Activated naive CD4-positive, alpha-beta T cell treated with anti-CD3 and anti-CD28 coated beads for 36 hours (primary cell): ENCODE measurements at regions of chr14 and their contacts with region 1.

Region 1: GRCh38 chr14:35826218-35826951 is at the start of gene BRMS1L:
- DNase-seq: peak; percentile 99
- H3K4me3 Mint-ChIP-seq: peak within 1 kb of the TSS; percentile 84
- H3K27ac Mint-ChIP-seq: peak within 1 kb of the TSS; percentile 92
- H3K4me1 Mint-ChIP-seq: peaks cover 29% of the 10 kb centered on the region
- H3K27me3 Mint-ChIP-seq: no peaks in the 10 kb centered on the region
- total RNA-seq, gene BRMS1L: 4.4 to 5.3 TPM

Region 2: GRCh38 chr14:34461334-34462131 is 1364.9 kb before region 1 on chr14:
- CTCF ChIA-PET with region 1: no interaction called
- intact Hi-C with region 1: loop called (anchors 5 kb)
- DNase-seq: peak; percentile 41
- H3K4me3 Mint-ChIP-seq: peak overlapping the region; percentile 87
- H3K27ac Mint-ChIP-seq: peak overlapping the region; percentile 65
- H3K4me1 Mint-ChIP-seq: peaks cover 16% of the 10 kb centered on the region
- H3K27me3 Mint-ChIP-seq: no peaks in the 10 kb centered on the region

Region 3: DNA sequence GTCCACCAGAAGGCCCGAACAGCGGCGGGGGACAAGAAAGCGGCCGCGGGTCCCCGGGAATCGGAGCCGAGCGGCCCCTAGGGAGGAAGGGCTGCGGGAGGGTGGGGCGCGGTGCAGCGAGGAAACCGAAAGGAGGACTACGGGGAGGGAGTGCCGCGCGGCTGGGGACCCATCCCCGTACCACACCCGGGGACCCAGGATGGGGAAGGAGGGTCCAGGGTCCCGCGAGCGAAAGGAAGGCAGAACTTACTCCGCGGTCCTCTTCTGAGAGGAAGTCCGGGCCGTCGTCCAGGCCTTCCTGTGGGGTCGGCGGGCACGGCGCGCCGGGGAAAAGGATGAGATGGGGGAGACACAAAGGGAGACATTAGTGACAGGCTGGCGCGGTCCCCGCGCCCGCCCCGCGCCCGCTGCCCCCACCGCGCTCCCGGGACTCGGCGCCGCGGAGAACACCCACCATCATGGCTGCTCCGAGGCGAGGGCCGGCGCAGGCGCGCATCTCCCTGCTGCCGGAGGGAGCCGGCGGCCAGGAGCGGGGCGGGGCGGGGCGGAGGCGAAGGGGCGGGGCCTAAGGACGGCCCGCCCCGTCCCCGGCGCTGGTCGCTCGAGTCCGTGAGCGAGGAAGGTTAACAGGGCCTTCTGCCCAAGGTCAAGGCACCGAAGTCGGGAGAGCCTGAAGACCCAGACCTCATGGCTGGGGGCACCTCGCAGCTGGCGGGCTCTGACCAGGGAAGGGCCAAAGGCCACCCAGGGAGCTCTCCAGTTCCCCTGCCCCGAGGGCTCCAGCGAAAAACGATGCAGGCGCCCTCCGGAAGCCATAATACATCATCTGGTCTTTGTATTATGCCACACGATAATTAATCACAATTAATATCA is 1196.5 kb before region 1 on chr14 and contains the start of gene SNX6:
- CTCF ChIA-PET with region 1: no interaction called
- intact Hi-C with region 1: loop called (anchors 1 kb)
- DNase-seq: peak; percentile 85
- H3K4me3 Mint-ChIP-seq: peak within 1 kb of the TSS; percentile 93
- H3K27ac Mint-ChIP-seq: peak within 1 kb of the TSS; percentile 89
- H3K4me1 Mint-ChIP-seq: peaks cover 20% of the 10 kb centered on the region
- H3K27me3 Mint-ChIP-seq: no peaks in the 10 kb centered on the region
- total RNA-seq, gene SNX6: 73.9 to 74.3 TPM

Region 4: GRCh38 chr14:35285168-35286002 is 541.0 kb before region 1 on chr14:
- CTCF ChIA-PET with region 1: no interaction called
- intact Hi-C with region 1: loop called (anchors 1 kb)
- DNase-seq: peak; percentile 47
- H3K4me3 Mint-ChIP-seq: peak overlapping the region; percentile 35
- H3K27ac Mint-ChIP-seq: peak overlapping the region; percentile 96
- H3K4me1 Mint-ChIP-seq: peaks cover 55% of the 10 kb centered on the region
- H3K27me3 Mint-ChIP-seq: no peaks in the 10 kb centered on the region

Region 5: DNA sequence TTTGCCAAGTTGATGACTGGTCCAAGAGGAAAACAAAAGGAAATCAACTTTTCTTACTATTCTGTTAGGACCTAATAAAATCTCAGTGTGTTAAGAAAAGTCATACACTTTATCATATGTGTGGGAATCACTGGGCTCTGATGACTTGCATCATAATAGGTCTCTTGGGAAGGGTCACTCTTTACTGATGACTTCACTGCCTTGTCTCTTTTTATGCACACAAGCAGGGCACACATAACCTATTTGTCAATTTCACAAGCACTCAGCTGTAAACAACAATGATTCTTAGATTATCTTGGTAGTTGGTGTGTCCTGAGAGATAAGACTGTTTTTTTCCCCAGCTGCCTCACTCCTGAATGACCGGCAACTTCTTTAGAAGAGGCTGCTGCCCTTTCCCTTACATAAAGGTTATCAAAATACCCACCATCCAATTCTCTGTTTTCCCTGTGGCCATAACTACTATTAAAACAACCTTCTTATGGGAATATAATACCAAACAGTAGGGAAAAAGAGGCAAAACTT is 343.3 kb before region 1 on chr14:
- CTCF ChIA-PET with region 1: no interaction called
- intact Hi-C with region 1: no loop called
- DNase-seq: no peak
- H3K4me3 Mint-ChIP-seq: no peak overlapping the region
- H3K27ac Mint-ChIP-seq: no peak overlapping the region
- H3K4me1 Mint-ChIP-seq: peaks cover 5% of the 10 kb centered on the region
- H3K27me3 Mint-ChIP-seq: peaks cover 5% of the 10 kb centered on the region

Region 6: GRCh38 chr14:35533357-35534207 is 292.8 kb before region 1 on chr14 and contains the start of gene INSM2:
- CTCF ChIA-PET with region 1: no interaction called
- intact Hi-C with region 1: loop called (anchors 2 kb)
- DNase-seq: peak; percentile 61
- H3K4me3 Mint-ChIP-seq: peak within 1 kb of the TSS; percentile 73
- H3K27ac Mint-ChIP-seq: no peak within 1 kb of the TSS
- H3K4me1 Mint-ChIP-seq: peaks cover 10% of the 10 kb centered on the region
- H3K27me3 Mint-ChIP-seq: peaks cover 61% of the 10 kb centered on the region
- total RNA-seq, gene INSM2: not detected

Region 7: DNA sequence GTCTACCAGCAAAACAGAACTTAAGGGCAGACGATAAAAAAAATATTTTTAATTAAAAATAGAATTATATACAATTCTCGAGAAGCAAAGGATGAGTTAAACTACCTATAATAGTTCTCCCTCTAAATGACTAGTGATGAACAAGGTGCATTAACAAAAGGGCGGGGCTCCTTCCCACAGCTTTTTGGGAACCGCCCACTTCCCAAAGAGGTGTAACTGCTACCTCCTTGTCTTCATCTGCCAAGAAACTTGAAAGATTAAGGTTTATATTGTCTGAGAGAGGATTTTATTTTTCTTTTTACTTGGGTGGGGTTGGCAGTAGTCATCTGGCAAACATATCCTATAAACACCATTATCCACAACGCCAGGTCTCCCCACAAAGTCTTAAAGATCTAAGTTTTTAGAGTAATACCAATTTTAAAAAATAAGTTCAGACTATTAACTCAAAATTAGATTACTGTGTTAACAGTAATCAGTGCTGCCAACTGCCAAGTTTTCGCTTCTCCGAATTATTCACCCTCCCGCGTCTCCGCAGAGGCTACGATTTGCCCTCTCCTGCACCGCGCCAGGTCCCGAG is 18.2 kb before region 1 on chr14:
- CTCF ChIA-PET with region 1: interaction called, 8 read pairs
- intact Hi-C with region 1: loop called (anchors 1 kb)
- DNase-seq: peak; percentile 61
- H3K4me3 Mint-ChIP-seq: peak overlapping the region; percentile 98
- H3K27ac Mint-ChIP-seq: peak overlapping the region; percentile 86
- H3K4me1 Mint-ChIP-seq: peaks cover 28% of the 10 kb centered on the region
- H3K27me3 Mint-ChIP-seq: no peaks in the 10 kb centered on the region

Region 8: DNA sequence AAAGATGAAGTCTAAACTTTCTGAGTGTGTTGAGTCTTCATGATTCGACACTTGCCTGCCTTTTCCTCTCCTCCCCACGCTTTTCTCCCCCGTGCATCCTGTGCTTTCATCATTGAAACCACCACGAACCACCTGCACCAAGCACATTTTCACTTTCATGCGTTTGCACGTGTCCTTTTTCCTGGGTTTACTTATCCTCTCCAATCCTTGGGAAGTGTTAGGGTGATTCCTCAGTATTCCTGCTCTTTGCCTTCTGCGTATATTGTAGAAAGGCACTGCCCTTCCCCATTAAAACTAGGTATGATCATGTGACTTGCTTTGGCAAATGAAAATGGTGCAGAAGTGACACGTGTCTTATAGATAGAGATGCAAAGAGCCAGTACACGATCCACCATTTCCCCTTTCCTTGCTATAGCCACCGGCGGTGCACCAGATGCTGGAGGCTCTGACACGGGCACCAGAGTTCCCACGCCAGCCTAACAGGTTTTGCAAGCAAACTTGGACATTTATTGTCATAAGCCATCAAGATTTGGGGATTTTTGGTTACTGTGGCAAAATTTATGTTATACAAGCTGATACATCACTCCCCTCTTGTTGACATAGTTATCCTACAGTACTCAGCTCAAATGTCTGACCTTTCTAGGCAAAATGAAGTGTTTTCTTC is 106.4 kb after region 1 on chr14:
- CTCF ChIA-PET with region 1: no interaction called
- intact Hi-C with region 1: loop called (anchors 1 kb)
- DNase-seq: peak; percentile 74
- H3K4me3 Mint-ChIP-seq: peak overlapping the region; percentile 52
- H3K27ac Mint-ChIP-seq: peak overlapping the region; percentile 20
- H3K4me1 Mint-ChIP-seq: peaks cover 31% of the 10 kb centered on the region
- H3K27me3 Mint-ChIP-seq: no peaks in the 10 kb centered on the region